ENCODE measurements at regions of chr12 and their contacts with region 1.

Region 1: DNA sequence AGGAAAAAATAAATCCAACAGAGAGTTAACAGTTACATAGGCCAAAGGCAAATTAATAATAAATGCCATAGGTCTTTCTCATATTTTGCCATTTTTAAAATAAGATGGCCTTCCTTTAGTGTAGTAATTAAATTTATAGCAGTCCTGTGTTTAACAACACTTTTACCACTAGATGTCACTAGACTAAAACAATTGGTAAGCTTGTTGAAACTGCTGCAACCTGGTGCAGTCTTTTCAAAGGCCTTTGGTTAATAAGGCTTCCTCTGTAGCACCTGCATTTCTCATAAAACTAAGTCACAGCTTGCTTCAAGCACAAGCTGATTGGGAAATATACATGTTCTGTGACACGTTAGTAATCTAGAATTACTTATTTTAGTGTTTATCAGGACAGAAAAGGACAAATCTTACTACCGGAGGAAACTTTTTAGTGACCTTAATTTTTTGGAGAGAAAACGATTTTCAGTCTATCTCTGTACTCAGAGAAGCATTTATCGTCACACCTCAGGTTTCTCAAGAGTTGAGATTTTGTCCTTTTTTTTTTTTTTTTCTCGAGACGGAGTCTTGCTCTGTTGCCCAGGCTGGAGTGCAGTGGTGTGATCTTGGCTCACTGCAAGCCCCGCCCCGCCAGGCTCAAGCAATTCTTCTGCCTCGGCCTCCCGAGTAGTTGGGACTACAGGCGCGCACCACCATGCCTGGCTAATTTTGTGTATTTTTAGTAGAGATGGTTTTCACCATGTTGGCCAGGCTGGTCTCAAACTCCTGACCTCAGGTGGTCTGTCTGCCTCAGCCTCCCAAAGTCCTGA is 20.0 kb downstream of the BORCS5 start:
- DNase-seq: peak; percentile 78
- ATAC-seq: peak; percentile 64
- H3K4me3 ChIP-seq: no peak overlapping the region
- H3K4me3 Mint-ChIP-seq: no peak overlapping the region
- H3K27ac ChIP-seq: no peak overlapping the region
- H3K27ac Mint-ChIP-seq: no peak overlapping the region
- H3K4me1 ChIP-seq: peaks cover 10 to 12% of the 10 kb centered on the region in 2 donors
- H3K4me1 Mint-ChIP-seq: peaks cover 21% of the 10 kb centered on the region
- H3K27me3 ChIP-seq: no peaks in the 10 kb centered on the region
- H3K27me3 Mint-ChIP-seq: no peaks in the 10 kb centered on the region
- CTCF ChIP-seq: peak; percentile 79

Region 2: GRCh38 chr12:11630046-11630706 is 746.7 kb before region 1 on chr12:
- CTCF ChIA-PET with region 1: no interaction called
- POLR2A ChIA-PET with region 1: no interaction called
- intact Hi-C with region 1: no loop called
- DNase-seq: no peak
- ATAC-seq: no peak
- H3K4me3 ChIP-seq: no peak overlapping the region
- H3K4me3 Mint-ChIP-seq: no peak overlapping the region
- H3K27ac ChIP-seq: no peak overlapping the region
- H3K27ac Mint-ChIP-seq: no peak overlapping the region
- H3K4me1 ChIP-seq: no peaks in the 10 kb centered on the region
- H3K4me1 Mint-ChIP-seq: no peaks in the 10 kb centered on the region
- H3K27me3 ChIP-seq: no peaks in the 10 kb centered on the region
- H3K27me3 Mint-ChIP-seq: no peaks in the 10 kb centered on the region
- CTCF ChIP-seq: no peak

Region 3: DNA sequence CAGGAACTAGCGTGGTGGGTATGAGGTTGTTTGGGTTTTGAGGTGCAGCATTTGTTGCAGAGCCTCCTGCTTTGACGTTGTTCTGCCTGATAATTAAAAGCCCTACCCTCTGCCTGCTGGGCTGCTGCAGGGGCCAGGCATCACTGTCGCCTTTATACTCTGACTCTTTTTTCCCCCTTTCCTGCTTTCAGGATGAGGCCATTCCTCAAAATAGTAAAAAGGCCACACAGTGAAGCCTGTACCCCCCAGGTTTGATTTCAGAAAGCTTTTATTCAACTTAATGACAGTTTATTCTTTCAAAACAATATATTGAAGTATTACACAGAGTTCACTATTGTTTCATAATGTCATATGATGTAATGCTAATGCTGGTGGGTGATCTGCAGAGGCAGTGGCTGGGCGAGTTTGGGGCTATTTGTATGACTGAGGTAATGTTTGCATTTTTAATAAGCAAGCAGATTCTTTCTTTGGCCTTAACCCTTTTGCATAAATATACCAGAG is 10.9 kb before region 1 on chr12:
- CTCF ChIA-PET with region 1: interaction called, 13 read pairs
- POLR2A ChIA-PET with region 1: no interaction called
- intact Hi-C with region 1: no loop called
- DNase-seq: no peak
- ATAC-seq: no peak
- H3K4me3 ChIP-seq: no peak overlapping the region
- H3K4me3 Mint-ChIP-seq: no peak overlapping the region
- H3K27ac ChIP-seq: no peak overlapping the region
- H3K27ac Mint-ChIP-seq: no peak overlapping the region
- H3K4me1 ChIP-seq: no peaks in the 10 kb centered on the region
- H3K4me1 Mint-ChIP-seq: peaks cover 12% of the 10 kb centered on the region
- H3K27me3 ChIP-seq: no peaks in the 10 kb centered on the region
- H3K27me3 Mint-ChIP-seq: no peaks in the 10 kb centered on the region
- CTCF ChIP-seq: no peak

Region 4: GRCh38 chr12:12474931-12475795 is 98.3 kb after region 1 on chr12:
- CTCF ChIA-PET with region 1: no interaction called
- POLR2A ChIA-PET with region 1: no interaction called
- intact Hi-C with region 1: no loop called
- DNase-seq: no peak
- ATAC-seq: no peak
- H3K4me3 ChIP-seq: no peak overlapping the region
- H3K4me3 Mint-ChIP-seq: peak overlapping the region; percentile 5
- H3K27ac ChIP-seq: no peak overlapping the region
- H3K27ac Mint-ChIP-seq: peak overlapping the region; percentile 11
- H3K4me1 ChIP-seq: peaks cover 0 to 6% of the 10 kb centered on the region in 2 donors
- H3K4me1 Mint-ChIP-seq: peaks cover 27% of the 10 kb centered on the region
- H3K27me3 ChIP-seq: no peaks in the 10 kb centered on the region
- H3K27me3 Mint-ChIP-seq: no peaks in the 10 kb centered on the region
- CTCF ChIP-seq: no peak

Region 5: DNA sequence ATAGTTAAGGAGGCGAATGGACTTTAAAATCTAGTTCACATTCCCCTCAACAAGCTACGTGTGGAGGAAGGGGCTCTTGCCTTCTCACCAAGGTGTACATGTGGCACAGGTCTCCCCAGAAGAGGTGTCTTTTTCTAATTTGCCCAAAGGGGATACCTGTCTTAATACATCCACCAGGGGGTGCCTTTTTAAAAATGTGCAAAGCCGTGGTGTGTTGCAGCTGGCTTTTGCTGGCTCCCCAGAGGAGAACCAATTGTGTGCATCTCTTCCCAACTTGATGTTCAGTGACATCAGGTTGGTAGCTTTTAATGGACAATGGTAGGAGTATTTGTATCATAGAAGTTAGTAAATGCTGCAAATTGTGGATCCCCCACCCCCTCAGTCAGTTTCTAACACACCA is 268.6 kb after region 1 on chr12:
- CTCF ChIA-PET with region 1: interaction called, 11 read pairs
- POLR2A ChIA-PET with region 1: no interaction called
- intact Hi-C with region 1: no loop called
- DNase-seq: peak; percentile 75
- ATAC-seq: peak; percentile 83
- H3K4me3 ChIP-seq: no peak overlapping the region
- H3K4me3 Mint-ChIP-seq: no peak overlapping the region
- H3K27ac ChIP-seq: no peak overlapping the region
- H3K27ac Mint-ChIP-seq: no peak overlapping the region
- H3K4me1 ChIP-seq: no peaks in the 10 kb centered on the region
- H3K4me1 Mint-ChIP-seq: peaks cover 4% of the 10 kb centered on the region
- H3K27me3 ChIP-seq: no peaks in the 10 kb centered on the region
- H3K27me3 Mint-ChIP-seq: no peaks in the 10 kb centered on the region
- CTCF ChIP-seq: peak; percentile 71

Region 6: GRCh38 chr12:12661086-12661485 is 284.2 kb after region 1 on chr12:
- CTCF ChIA-PET with region 1: interaction called, 45 read pairs
- POLR2A ChIA-PET with region 1: no interaction called
- intact Hi-C with region 1: loop called (anchors 1 kb)
- DNase-seq: no peak
- ATAC-seq: no peak
- H3K4me3 ChIP-seq: no peak overlapping the region
- H3K4me3 Mint-ChIP-seq: no peak overlapping the region
- H3K27ac ChIP-seq: no peak overlapping the region
- H3K27ac Mint-ChIP-seq: no peak overlapping the region
- H3K4me1 ChIP-seq: peaks cover 0 to 3% of the 10 kb centered on the region in 2 donors
- H3K4me1 Mint-ChIP-seq: peaks cover under 1% of the 10 kb centered on the region
- H3K27me3 ChIP-seq: no peaks in the 10 kb centered on the region
- H3K27me3 Mint-ChIP-seq: no peaks in the 10 kb centered on the region
- CTCF ChIP-seq: no peak

Region 7: GRCh38 chr12:12704593-12705230 is 327.9 kb after region 1 on chr12:
- CTCF ChIA-PET with region 1: interaction called, 30 read pairs
- POLR2A ChIA-PET with region 1: interaction called, 4 read pairs
- intact Hi-C with region 1: loop called (anchors 1 kb)
- DNase-seq: peak; percentile 77
- ATAC-seq: peak; percentile 97
- H3K4me3 ChIP-seq: no peak overlapping the region
- H3K4me3 Mint-ChIP-seq: no peak overlapping the region
- H3K27ac ChIP-seq: no peak overlapping the region
- H3K27ac Mint-ChIP-seq: no peak overlapping the region
- H3K4me1 ChIP-seq: peaks cover 0 to 3% of the 10 kb centered on the region in 2 donors
- H3K4me1 Mint-ChIP-seq: peaks cover 7% of the 10 kb centered on the region
- H3K27me3 ChIP-seq: no peaks in the 10 kb centered on the region
- H3K27me3 Mint-ChIP-seq: no peaks in the 10 kb centered on the region
- CTCF ChIP-seq: peak; percentile 86

Measured in B cell (primary cell).